ENCODE measurements at regions of chr7 and their contacts with region 1.

Region 1: DNA sequence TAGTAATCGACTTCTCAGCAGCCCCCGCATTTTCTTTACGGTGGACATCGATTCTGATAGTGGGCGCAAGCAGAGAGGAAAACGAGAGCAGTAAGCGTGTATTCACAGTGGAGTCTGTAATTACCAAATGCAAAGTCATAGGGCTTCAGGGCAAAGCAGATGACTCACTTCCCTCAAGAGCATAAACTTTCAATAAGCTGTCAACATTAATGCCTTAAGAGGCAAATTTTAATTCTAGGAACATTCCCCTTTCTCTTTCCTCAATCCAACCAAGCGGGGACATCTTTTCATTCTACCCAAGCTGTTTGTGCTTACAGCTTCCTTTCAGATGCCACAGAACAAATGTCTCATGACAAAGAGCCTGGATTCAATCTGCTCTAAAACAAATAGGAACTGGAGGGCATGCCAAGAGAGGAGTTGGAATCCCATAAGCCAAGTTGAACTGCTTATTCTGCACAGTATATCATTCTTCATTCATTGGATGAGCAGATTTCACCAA is 48.6 kb downstream of the MALSU1 start:
- DNase-seq: peak; percentile 55 to 98
- H3K4me3 ChIP-seq: peak overlapping the region; percentile 46; the same call in 1 of the 2 replicates
- H3K27ac ChIP-seq: peak overlapping the region; percentile 91
- H3K4me1 ChIP-seq: peaks cover 88% of the 10 kb centered on the region
- H3K27me3 ChIP-seq: no peaks in the 10 kb centered on the region
- CTCF ChIP-seq: no peak

Region 2: DNA sequence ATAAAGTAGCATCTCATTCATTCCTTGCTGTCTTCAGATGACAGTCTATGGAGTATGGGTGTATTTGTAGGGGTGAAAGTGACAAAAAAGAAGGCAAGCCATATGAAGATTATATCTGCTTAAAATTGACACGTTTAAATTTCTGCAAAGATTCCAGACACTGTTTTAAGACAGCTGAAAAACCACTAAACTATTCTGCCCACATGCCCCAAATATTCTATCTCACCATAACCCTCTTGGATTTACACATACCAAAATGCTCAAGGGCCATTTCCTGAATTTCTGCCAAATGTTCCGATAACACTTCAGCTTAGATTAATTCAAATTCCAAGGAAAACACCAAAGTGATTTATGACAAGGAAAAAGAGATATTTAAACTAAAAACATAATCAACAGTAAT is 720.6 kb before region 1 on chr7:
- CTCF ChIA-PET with region 1: no interaction called
- POLR2A ChIA-PET with region 1: no interaction called
- intact Hi-C with region 1: no loop called
- DNase-seq: no peak
- H3K4me3 ChIP-seq: no peak overlapping the region
- H3K27ac ChIP-seq: no peak overlapping the region
- H3K4me1 ChIP-seq: no peaks in the 10 kb centered on the region
- H3K27me3 ChIP-seq: no peaks in the 10 kb centered on the region
- CTCF ChIP-seq: no peak

Region 3: GRCh38 chr7:23181684-23182553 is 165.8 kb before region 1 on chr7 and contains the start of gene NUP42:
- CTCF ChIA-PET with region 1: no interaction called
- POLR2A ChIA-PET with region 1: no interaction called
- intact Hi-C with region 1: loop called (anchors 10 kb)
- DNase-seq: peak; percentile 99 to 100
- H3K4me3 ChIP-seq: peak within 1 kb of the TSS; percentile 98
- H3K27ac ChIP-seq: peak within 1 kb of the TSS; percentile 87
- H3K4me1 ChIP-seq: peaks cover 27% of the 10 kb centered on the region
- H3K27me3 ChIP-seq: no peaks in the 10 kb centered on the region
- CTCF ChIP-seq: no peak
- total RNA-seq, gene NUP42: 41.3 and 51.3 TPM in 2 replicates

Region 4: GRCh38 chr7:23334482-23335056 is 13.2 kb before region 1 on chr7:
- CTCF ChIA-PET with region 1: no interaction called
- POLR2A ChIA-PET with region 1: no interaction called
- intact Hi-C with region 1: loop called (anchors 1 kb)
- DNase-seq: peak; percentile 80 to 100
- H3K4me3 ChIP-seq: no peak overlapping the region
- H3K27ac ChIP-seq: peak overlapping the region; percentile 60
- H3K4me1 ChIP-seq: peaks cover 52% of the 10 kb centered on the region
- H3K27me3 ChIP-seq: no peaks in the 10 kb centered on the region
- CTCF ChIP-seq: no peak

Region 5: DNA sequence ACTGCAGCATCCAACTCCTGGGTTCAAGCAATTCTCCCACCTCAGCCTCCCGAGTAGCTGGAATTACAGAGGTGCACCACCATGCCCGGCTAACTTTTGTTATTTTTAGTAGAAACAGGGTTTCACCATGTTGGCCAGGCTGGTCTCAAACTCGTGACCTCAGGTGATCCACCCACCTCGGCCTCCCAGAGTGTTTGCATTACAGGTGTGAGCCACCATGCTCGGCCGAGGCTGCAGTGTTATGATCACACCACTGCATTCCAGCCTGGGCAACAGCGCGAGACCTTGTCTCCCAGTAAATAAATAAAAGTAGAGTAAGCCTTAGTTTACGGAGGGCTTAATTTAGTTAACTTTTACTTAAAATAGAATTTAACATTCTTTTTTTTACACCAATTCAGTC is 146.3 kb after region 1 on chr7:
- CTCF ChIA-PET with region 1: no interaction called
- POLR2A ChIA-PET with region 1: interaction called, 15 read pairs
- intact Hi-C with region 1: no loop called
- DNase-seq: no peak
- H3K4me3 ChIP-seq: no peak overlapping the region
- H3K27ac ChIP-seq: no peak overlapping the region
- H3K4me1 ChIP-seq: no peaks in the 10 kb centered on the region
- H3K27me3 ChIP-seq: no peaks in the 10 kb centered on the region
- CTCF ChIP-seq: no peak

Measured in PC-9 (cell line).